ENCODE measurements at regions of chr2 and their contacts with region 1.

Region 1: DNA sequence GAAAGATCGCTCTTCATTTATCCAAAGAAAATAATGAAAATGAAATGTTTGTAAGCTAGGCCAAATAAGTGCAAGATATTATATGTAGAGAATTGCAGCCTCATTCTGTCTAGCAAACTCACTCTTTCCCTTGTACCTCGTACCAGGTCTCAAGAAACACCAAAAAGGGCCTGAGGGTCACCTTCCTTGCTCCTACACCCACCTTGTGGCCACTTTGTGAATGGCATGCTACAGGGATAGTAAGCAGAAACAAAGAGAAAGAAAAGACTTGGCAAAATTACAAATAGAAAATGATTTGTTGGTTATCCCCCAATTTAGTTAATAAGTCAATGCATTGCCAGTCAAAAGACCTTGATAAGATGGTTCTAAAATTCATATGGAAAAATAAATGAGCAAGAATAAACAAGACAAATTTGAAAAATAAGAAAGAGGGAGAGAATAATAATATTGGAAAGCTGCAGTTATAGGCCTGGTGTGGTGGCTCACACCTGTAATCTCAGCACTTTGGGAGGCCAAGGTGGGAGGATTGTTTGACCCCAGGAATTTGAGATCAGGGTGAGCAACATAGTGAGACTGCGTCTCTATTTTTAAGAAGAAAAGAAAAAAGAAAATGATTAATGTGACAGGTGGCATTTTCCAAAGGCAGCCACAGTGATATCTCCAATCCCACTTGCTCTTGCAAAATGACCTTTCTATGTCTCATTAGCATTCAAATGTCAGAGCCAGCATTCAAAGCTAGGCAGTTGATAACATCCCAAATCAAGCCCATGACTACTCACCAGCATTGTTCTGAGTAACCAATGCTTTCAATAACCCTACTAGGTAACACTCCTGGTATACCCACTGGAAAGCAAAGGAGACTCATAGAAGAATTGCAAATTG is 38.8 kb upstream of the BMP10 start:
- DNase-seq: peak; percentile 85
- H3K4me3 Mint-ChIP-seq: no peak overlapping the region
- H3K27ac Mint-ChIP-seq: peak overlapping the region; percentile 78
- H3K4me1 Mint-ChIP-seq: peaks cover 36% of the 10 kb centered on the region
- H3K27me3 Mint-ChIP-seq: no peaks in the 10 kb centered on the region

Region 2: DNA sequence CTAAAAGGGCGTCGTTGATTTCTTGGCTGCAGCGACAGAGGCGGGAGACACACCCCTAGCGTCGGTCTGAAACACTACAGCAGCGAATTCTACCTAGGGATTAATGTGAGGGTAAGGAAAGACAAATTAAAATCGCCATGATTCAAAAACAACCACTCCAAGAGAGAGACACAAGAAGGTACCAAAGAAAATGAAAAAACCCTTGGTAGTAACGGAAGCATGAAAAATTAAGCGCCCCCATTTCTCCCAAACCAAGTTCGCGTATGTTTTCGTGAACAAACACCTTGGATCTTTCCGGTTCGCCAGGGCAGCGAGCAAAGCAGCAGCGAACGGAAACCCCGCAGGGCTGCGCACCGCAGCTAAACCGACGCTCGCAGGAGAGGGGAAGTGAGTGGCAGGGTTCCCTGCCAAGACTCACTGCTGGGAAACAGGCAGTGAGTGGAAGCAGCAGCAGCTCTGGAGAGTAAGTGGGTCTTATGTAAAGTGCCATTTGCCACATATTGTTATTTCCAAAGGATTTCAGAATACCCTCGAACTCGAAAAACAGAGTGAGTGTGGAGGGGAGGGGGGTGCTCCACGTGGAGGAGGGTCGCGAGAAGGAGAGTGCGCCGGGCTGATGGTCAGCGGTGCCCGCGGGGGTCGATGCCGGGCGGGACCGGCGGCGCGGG is 658.7 kb before region 1 on chr2:
- CTCF ChIA-PET with region 1: no interaction called
- POLR2A ChIA-PET with region 1: no interaction called
- intact Hi-C with region 1: loop called (anchors 5 kb)
- DNase-seq: peak; percentile 86
- H3K4me3 Mint-ChIP-seq: peak overlapping the region; percentile 86
- H3K27ac Mint-ChIP-seq: peak overlapping the region; percentile 97
- H3K4me1 Mint-ChIP-seq: peaks cover 35% of the 10 kb centered on the region
- H3K27me3 Mint-ChIP-seq: no peaks in the 10 kb centered on the region

Region 3: DNA sequence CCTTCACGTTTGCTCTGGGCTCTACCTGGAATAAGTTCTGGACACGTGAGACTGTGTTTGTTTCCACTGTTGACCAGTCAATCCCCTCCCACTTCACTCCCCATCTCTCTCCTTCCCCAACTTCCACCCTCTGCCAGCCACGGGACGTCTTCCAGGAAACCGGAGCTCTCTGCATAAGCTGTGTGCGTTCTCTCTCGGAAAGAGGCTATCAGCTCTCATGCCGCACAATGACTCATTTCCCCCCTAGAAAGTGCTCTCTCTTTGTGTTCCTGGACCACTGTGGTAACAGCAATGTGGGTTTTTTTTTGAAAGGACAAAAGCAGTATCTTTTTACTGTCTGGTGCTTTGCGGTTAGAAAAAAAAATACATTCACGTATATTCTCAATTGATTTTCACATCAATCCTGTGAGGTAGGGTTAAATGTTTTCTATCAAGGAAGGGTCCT is 256.5 kb before region 1 on chr2:
- CTCF ChIA-PET with region 1: no interaction called
- POLR2A ChIA-PET with region 1: no interaction called
- intact Hi-C with region 1: loop called (anchors 2 kb)
- DNase-seq: peak; percentile 71
- H3K4me3 Mint-ChIP-seq: no peak overlapping the region
- H3K27ac Mint-ChIP-seq: peak overlapping the region; percentile 20
- H3K4me1 Mint-ChIP-seq: peaks cover 34% of the 10 kb centered on the region
- H3K27me3 Mint-ChIP-seq: peaks cover 20% of the 10 kb centered on the region

Region 4: GRCh38 chr2:68742626-68743415 is 167.2 kb before region 1 on chr2:
- CTCF ChIA-PET with region 1: interaction called, 77 read pairs
- POLR2A ChIA-PET with region 1: interaction called, 8 read pairs
- intact Hi-C with region 1: no loop called
- DNase-seq: no peak
- H3K4me3 Mint-ChIP-seq: peak overlapping the region; percentile 40
- H3K27ac Mint-ChIP-seq: peak overlapping the region; percentile 75
- H3K4me1 Mint-ChIP-seq: peaks cover 90% of the 10 kb centered on the region
- H3K27me3 Mint-ChIP-seq: no peaks in the 10 kb centered on the region

Region 5: GRCh38 chr2:68828887-68829708 is 80.9 kb before region 1 on chr2:
- CTCF ChIA-PET with region 1: interaction called, 11 read pairs
- POLR2A ChIA-PET with region 1: interaction called, 3 read pairs
- intact Hi-C with region 1: no loop called
- DNase-seq: peak; percentile 86
- H3K4me3 Mint-ChIP-seq: peak overlapping the region; percentile 21
- H3K27ac Mint-ChIP-seq: peak overlapping the region; percentile 79
- H3K4me1 Mint-ChIP-seq: peaks cover 64% of the 10 kb centered on the region
- H3K27me3 Mint-ChIP-seq: no peaks in the 10 kb centered on the region

Region 6: DNA sequence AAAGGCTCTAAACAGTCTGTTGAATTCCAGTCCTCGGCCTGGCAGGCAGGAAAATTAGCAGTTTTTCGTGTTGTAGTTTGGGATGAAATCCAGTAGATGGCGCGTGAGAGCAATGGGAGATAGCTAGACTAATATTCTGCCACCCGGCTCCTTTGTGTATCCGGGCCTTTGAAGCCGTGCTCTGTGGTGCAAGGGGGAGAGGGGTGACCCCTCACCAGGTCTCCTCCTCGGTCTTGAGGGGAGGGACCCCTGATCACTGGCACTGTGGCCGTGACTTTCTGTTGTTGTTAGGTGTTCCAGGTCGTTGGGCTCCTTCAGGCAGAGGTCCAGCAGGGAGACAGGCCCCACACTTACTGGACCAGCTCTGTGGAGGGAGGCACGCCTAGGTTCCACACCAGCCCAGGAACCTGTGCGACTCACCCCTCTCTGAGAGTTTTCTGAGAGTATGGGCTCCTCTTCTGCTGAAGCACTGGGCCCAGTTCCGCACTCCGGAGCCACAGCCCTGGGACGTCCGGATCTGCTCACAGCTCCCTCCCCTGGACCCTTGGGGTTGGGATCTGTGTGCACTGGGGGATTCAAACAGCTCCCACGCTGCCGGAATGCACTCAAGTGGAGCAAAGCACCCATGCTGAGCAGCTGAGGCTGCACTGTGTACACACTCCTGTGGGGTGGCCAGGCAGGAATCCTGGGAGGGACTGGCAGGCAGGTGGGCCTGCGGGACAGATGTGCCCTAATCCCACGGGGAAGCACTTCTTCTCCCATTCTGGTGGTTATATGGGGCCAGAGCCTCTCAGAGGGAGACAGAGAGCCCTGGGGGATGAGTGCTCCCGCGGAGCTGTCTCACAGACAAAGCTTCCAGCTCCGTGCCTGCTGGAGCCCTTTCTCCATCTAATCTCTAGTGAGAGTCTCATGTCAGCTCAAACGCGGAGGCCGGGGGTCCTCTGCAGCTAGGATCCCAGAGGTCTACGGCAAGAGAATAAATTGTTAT is 33.8 kb after region 1 on chr2:
- CTCF ChIA-PET with region 1: interaction called, 14 read pairs
- POLR2A ChIA-PET with region 1: no interaction called
- intact Hi-C with region 1: loop called (anchors 2 kb)
- DNase-seq: peak; percentile 58
- H3K4me3 Mint-ChIP-seq: no peak overlapping the region
- H3K27ac Mint-ChIP-seq: no peak overlapping the region
- H3K4me1 Mint-ChIP-seq: peaks cover 8% of the 10 kb centered on the region
- H3K27me3 Mint-ChIP-seq: peaks cover 32% of the 10 kb centered on the region

Region 7: GRCh38 chr2:68980956-68981355 is 70.9 kb after region 1 on chr2:
- CTCF ChIA-PET with region 1: no interaction called
- POLR2A ChIA-PET with region 1: no interaction called
- intact Hi-C with region 1: no loop called
- DNase-seq: no peak
- H3K4me3 Mint-ChIP-seq: no peak overlapping the region
- H3K27ac Mint-ChIP-seq: no peak overlapping the region
- H3K4me1 Mint-ChIP-seq: no peaks in the 10 kb centered on the region
- H3K27me3 Mint-ChIP-seq: peaks cover 12% of the 10 kb centered on the region

Measured in activated CD4-positive, alpha-beta memory T cell treated with anti-CD3 and anti-CD28 coated beads for 36 hours (primary cell).